Motor neuron (in vitro differentiated cells): ENCODE measurements at regions of chr12 and their contacts with region 1.

Region 1: GRCh38 chr12:70733385-70733784 is 96.2 kb upstream of the PTPRB start:
- ATAC-seq: peak; percentile 75 to 97 (median 90)
- H3K4me3 ChIP-seq: no peak overlapping the region
- H3K27ac ChIP-seq: no peak overlapping the region
- H3K4me1 ChIP-seq: peaks cover 0 to 3% of the 10 kb centered on the region in 2 donors

Region 2: DNA sequence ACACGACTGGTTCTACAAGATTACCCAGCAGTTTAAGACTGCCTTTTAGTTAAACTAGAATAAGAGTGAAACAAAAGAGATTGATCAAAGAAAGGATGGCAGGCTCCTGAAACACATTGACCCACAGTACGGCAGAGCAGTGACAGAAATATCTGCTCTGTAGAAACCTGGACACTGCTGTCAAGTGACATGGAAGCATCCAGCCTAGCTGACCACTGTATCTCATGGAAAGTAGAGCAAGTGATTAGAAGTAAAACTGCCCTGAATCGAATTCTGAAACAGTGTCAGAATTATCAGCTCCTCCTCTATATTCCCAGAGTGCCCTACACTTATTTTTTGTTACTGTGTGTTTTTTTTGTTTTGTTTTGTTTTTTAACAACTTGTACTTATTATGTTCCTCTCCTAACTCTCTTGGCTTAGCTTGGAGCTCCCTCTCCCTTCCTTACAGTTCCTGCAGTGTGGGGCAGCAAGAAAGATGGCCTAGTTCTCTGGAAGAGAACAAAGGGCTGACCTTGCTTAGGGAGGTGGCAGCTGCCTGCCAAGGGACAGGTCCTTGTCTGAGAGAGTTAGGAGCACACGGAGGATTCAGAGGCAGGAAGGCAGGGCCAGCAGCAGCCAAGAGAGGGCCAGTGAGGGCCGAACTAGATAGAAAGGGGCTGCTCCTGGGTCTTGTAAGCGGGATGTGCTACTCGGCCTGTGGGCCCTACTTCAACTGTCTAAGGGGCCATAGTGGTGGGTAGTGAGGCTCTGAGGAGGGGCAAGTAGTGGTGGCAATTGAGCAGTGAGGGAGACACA is 90.0 kb after region 1 on chr12:
- in situ Hi-C with region 1: loop called in 1 of 9 experiments (anchors 10 kb)
- ATAC-seq: peak in 5 of 8 experiments; percentile 28 to 71 (median 47)
- H3K4me3 ChIP-seq: no peak overlapping the region
- H3K27ac ChIP-seq: no peak overlapping the region
- H3K4me1 ChIP-seq: peaks cover 5 to 8% of the 10 kb centered on the region in 2 donors

Region 3: DNA sequence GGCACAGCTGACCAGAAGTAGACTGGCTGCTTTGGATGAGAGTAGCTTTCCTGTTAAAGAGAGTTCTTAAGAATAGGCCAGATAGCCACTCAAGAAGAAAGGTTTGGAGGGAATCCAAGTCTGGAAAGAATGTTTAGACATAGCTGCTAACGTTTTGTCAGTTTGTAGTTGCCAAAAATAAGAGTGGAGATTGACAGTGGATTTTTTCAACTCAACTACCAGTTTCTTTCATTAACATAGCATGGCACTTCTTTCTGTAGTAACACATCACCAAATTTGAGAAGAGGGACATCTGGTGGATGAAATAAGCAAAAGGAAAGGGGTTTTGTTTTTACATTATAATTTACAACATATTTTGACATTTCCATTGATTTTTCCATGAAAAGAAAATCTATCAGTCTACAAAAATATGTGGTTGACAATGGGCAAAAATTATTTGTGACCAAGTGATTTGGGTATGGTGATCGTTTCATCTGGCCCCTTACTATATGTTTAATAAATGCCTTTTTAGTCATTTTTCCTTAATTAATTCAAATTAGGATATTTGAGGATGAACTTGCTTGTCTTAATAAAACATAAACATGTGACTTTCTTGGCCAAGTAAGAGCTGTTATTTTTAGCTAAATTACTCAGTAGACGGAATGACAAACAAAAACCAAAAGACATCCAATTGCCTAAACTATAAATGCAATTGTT is 116.0 kb after region 1 on chr12:
- in situ Hi-C with region 1: loop called in 2 of 9 experiments (anchors 10 kb)
- ATAC-seq: peak in 3 of 8 experiments; percentile 55 to 62 (median 55)
- H3K4me3 ChIP-seq: no peak overlapping the region
- H3K27ac ChIP-seq: no peak overlapping the region
- H3K4me1 ChIP-seq: no peaks in the 10 kb centered on the region

Region 4: GRCh38 chr12:70907412-70907811 is 174.0 kb after region 1 on chr12:
- in situ Hi-C with region 1: no loop called
- ATAC-seq: no peak
- H3K4me3 ChIP-seq: no peak overlapping the region
- H3K27ac ChIP-seq: no peak overlapping the region
- H3K4me1 ChIP-seq: no peaks in the 10 kb centered on the region

Region 5: DNA sequence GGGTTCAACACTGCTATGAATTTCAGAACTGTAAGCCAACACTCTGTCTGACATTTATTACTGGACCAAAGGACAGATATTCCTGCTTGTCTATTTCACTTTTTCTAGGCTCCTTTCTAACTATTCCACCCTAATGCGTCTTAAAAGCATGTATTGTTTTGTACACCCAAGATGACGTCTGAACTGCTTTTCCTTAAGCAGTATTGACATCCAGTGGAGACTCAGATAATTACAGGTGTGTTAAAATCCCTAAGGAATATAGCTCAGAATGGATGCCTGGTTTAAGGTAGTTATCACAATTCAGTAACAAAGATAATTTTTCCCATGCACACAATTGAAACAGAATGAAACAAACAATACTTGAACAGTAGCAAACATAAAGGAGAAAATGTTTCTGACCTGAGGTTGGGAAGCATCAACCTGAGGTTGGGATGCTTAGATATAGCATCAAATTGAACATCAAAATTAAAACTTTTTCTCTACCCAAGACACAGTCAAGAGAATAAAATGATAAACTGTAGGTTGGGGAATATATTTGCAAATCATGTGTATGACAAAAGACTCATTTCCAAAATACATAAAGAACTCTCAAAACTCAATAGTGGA is 280.9 kb after region 1 on chr12:
- in situ Hi-C with region 1: loop called in 5 of 9 experiments (anchors 10 to 25 kb)
- ATAC-seq: peak in 5 of 8 experiments; percentile 30 to 76 (median 62)
- H3K4me3 ChIP-seq: no peak overlapping the region
- H3K27ac ChIP-seq: no peak overlapping the region
- H3K4me1 ChIP-seq: no peaks in the 10 kb centered on the region

Region 6: GRCh38 chr12:71392521-71393145 is 659.2 kb after region 1 on chr12:
- in situ Hi-C with region 1: loop called in 1 of 9 experiments (anchors 25 kb)
- ATAC-seq: peak; percentile 63 to 93 (median 82)
- H3K4me3 ChIP-seq: no peak overlapping the region
- H3K27ac ChIP-seq: no peak overlapping the region
- H3K4me1 ChIP-seq: no peaks in the 10 kb centered on the region

Region 7: GRCh38 chr12:71636704-71637115 is 903.3 kb after region 1 on chr12:
- in situ Hi-C with region 1: loop called in 2 of 9 experiments (anchors 25 kb)
- ATAC-seq: peak in 3 of 8 experiments; percentile 28 to 50 (median 38)
- H3K4me3 ChIP-seq: no peak overlapping the region
- H3K27ac ChIP-seq: no peak overlapping the region
- H3K4me1 ChIP-seq: no peaks in the 10 kb centered on the region

Region 8: GRCh38 chr12:71694099-71694820 is 960.9 kb after region 1 on chr12:
- in situ Hi-C with region 1: no loop called
- ATAC-seq: peak in 2 of 8 experiments; percentile 76 to 90
- H3K4me3 ChIP-seq: no peak overlapping the region
- H3K27ac ChIP-seq: no peak overlapping the region
- H3K4me1 ChIP-seq: no peaks in the 10 kb centered on the region